Naive thymus-derived CD4-positive, alpha-beta T cell (primary cell): ENCODE measurements at regions of chr21 and their contacts with region 1.

Region 1: GRCh38 chr21:17903029-17903806 is 84.1 kb upstream of the C21orf91 start:
- DNase-seq: peak in 7 of 9 donors; percentile 10 to 58 (median 37)
- ATAC-seq: peak; percentile 79
- H3K4me3 ChIP-seq: no peak overlapping the region
- H3K4me3 Mint-ChIP-seq: no peak overlapping the region
- H3K27ac ChIP-seq: no peak overlapping the region
- H3K27ac Mint-ChIP-seq: no peak overlapping the region
- H3K4me1 ChIP-seq: no peaks in the 10 kb centered on the region
- H3K4me1 Mint-ChIP-seq: peaks cover 0 to 12% (median 3%) of the 10 kb centered on the region in 7 donors
- H3K27me3 ChIP-seq: no peaks in the 10 kb centered on the region
- H3K27me3 Mint-ChIP-seq: peaks cover 0 to 5% (median 0%) of the 10 kb centered on the region in 5 donors

Region 2: DNA sequence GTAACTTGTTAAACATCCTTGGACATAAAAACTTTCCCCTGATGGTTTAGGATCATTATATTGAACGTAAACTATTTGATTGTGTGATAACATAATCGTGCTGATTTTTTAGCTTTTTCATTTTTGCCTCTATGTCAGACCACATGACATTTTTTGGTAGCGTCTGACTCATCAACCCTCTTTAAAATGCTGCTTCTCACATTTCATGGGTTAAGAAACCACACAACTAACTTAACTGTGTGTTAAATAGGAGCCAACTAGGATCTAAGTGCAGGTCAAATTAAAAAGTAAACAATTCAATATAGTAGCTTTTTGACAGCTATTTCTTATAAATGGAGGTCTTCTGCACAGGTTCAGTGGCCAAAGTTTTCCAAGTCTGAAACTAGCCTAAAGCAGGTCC is 300.3 kb before region 1 on chr21:
- CTCF ChIA-PET with region 1: no interaction called
- POLR2A ChIA-PET with region 1: no interaction called
- intact Hi-C with region 1: loop called in 1 of 2 experiments (anchors 10 kb)
- DNase-seq: no peak
- ATAC-seq: no peak
- H3K4me3 ChIP-seq: no peak overlapping the region
- H3K4me3 Mint-ChIP-seq: no peak overlapping the region
- H3K27ac ChIP-seq: no peak overlapping the region
- H3K27ac Mint-ChIP-seq: peak overlapping the region in 1 of 9 donors; percentile 52
- H3K4me1 ChIP-seq: no peaks in the 10 kb centered on the region
- H3K4me1 Mint-ChIP-seq: peaks cover 0 to 37% (median 0%) of the 10 kb centered on the region in 7 donors
- H3K27me3 ChIP-seq: no peaks in the 10 kb centered on the region
- H3K27me3 Mint-ChIP-seq: no peaks in the 10 kb centered on the region

Region 3: GRCh38 chr21:17726047-17726830 is 177.0 kb before region 1 on chr21:
- CTCF ChIA-PET with region 1: no interaction called
- POLR2A ChIA-PET with region 1: no interaction called
- intact Hi-C with region 1: loop called in 1 of 2 experiments (anchors 1 kb)
- DNase-seq: no peak
- ATAC-seq: no peak
- H3K4me3 ChIP-seq: no peak overlapping the region
- H3K4me3 Mint-ChIP-seq: no peak overlapping the region
- H3K27ac ChIP-seq: no peak overlapping the region
- H3K27ac Mint-ChIP-seq: no peak overlapping the region
- H3K4me1 ChIP-seq: no peaks in the 10 kb centered on the region
- H3K4me1 Mint-ChIP-seq: peaks cover 0 to 6% (median 0%) of the 10 kb centered on the region in 7 donors
- H3K27me3 ChIP-seq: no peaks in the 10 kb centered on the region
- H3K27me3 Mint-ChIP-seq: peaks cover 0 to 2% (median 0%) of the 10 kb centered on the region in 5 donors

Region 4: GRCh38 chr21:17758657-17759056 is 144.6 kb before region 1 on chr21:
- CTCF ChIA-PET with region 1: no interaction called
- POLR2A ChIA-PET with region 1: no interaction called
- intact Hi-C with region 1: no loop called
- DNase-seq: no peak
- ATAC-seq: peak; percentile 27
- H3K4me3 ChIP-seq: no peak overlapping the region
- H3K4me3 Mint-ChIP-seq: no peak overlapping the region
- H3K27ac ChIP-seq: no peak overlapping the region
- H3K27ac Mint-ChIP-seq: no peak overlapping the region
- H3K4me1 ChIP-seq: no peaks in the 10 kb centered on the region
- H3K4me1 Mint-ChIP-seq: peaks cover 0 to 10% (median 0%) of the 10 kb centered on the region in 7 donors
- H3K27me3 ChIP-seq: no peaks in the 10 kb centered on the region
- H3K27me3 Mint-ChIP-seq: no peaks in the 10 kb centered on the region